ENCODE measurements at regions of chr17 and their contacts with region 1.

Region 1: GRCh38 chr17:43940630-43941029 is 1.6 kb downstream of the PPY start:
- DNase-seq: peak; percentile 30
- H3K4me3 Mint-ChIP-seq: no peak overlapping the region
- H3K27ac Mint-ChIP-seq: no peak overlapping the region
- H3K4me1 Mint-ChIP-seq: peaks cover 17% of the 10 kb centered on the region
- H3K27me3 Mint-ChIP-seq: peaks cover 4% of the 10 kb centered on the region

Region 2: GRCh38 chr17:43907425-43907981 is 33.1 kb before region 1 on chr17 and contains the start of gene MPP2:
- CTCF ChIA-PET with region 1: interaction called, 33 read pairs
- POLR2A ChIA-PET with region 1: no interaction called
- intact Hi-C with region 1: no loop called
- DNase-seq: peak; percentile 71
- H3K4me3 Mint-ChIP-seq: peak within 1 kb of the TSS; percentile 67
- H3K27ac Mint-ChIP-seq: no peak within 1 kb of the TSS
- H3K4me1 Mint-ChIP-seq: peaks cover 17% of the 10 kb centered on the region
- H3K27me3 Mint-ChIP-seq: peaks cover 11% of the 10 kb centered on the region
- total RNA-seq, gene MPP2: 1.8 to 2.0 TPM

Region 3: GRCh38 chr17:43958953-43959352 is 18.3 kb after region 1 on chr17:
- CTCF ChIA-PET with region 1: interaction called, 16 read pairs
- POLR2A ChIA-PET with region 1: interaction called, 3 read pairs
- intact Hi-C with region 1: no loop called
- DNase-seq: no peak
- H3K4me3 Mint-ChIP-seq: no peak overlapping the region
- H3K27ac Mint-ChIP-seq: no peak overlapping the region
- H3K4me1 Mint-ChIP-seq: no peaks in the 10 kb centered on the region
- H3K27me3 Mint-ChIP-seq: peaks cover 13% of the 10 kb centered on the region

Region 4: DNA sequence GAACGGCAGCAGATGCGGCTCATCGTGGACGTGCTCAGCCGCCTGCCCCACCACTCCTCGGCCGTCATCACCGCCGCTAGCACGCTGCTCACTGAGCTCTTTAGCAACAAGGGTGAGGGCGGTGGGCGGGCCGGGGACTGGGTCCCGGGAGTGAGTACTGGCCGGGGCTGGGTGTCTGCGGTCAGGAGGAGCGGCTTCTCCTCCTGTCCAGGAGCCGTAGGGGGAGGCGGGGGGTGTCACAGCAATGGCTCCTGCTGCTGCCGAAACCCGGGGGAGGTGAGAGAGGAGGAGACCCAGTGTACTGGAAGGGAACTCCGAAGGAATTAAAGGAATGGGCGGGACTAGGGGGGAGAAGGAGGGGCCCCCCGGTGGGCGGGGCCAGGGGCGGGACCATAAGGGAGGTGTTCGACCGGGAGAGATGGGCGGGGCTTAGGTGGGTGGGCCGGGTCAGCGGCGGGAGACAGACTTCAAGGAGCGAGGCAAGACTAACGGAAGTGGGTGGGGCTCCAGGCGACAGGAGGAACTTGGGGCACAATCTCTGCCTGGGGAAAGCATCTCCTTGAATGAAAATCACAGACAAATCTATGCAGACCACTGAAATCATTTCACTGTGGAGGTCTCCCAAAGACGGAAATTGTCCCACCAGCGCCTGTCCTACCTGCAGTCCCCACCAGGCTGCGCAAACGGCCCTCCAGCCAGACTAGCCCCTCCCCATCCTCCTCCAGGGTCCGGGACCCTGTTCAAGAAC is 66.1 kb after region 1 on chr17:
- CTCF ChIA-PET with region 1: interaction called, 12 read pairs
- POLR2A ChIA-PET with region 1: no interaction called
- intact Hi-C with region 1: no loop called
- DNase-seq: peak; percentile 100
- H3K4me3 Mint-ChIP-seq: peak overlapping the region; percentile 86
- H3K27ac Mint-ChIP-seq: peak overlapping the region; percentile 3
- H3K4me1 Mint-ChIP-seq: peaks cover 23% of the 10 kb centered on the region
- H3K27me3 Mint-ChIP-seq: peaks cover 6% of the 10 kb centered on the region

Region 5: GRCh38 chr17:44167181-44167861 is 226.7 kb after region 1 on chr17:
- CTCF ChIA-PET with region 1: interaction called, 13 read pairs
- POLR2A ChIA-PET with region 1: no interaction called
- intact Hi-C with region 1: no loop called
- DNase-seq: no peak
- H3K4me3 Mint-ChIP-seq: no peak overlapping the region
- H3K27ac Mint-ChIP-seq: no peak overlapping the region
- H3K4me1 Mint-ChIP-seq: peaks cover 9% of the 10 kb centered on the region
- H3K27me3 Mint-ChIP-seq: no peaks in the 10 kb centered on the region